Activated CD8-positive, alpha-beta T cell treated with anti-CD3 and anti-CD28 coated beads for 36 hours (primary cell): ENCODE measurements at regions of chr22 and their contacts with region 1.

Region 1: DNA sequence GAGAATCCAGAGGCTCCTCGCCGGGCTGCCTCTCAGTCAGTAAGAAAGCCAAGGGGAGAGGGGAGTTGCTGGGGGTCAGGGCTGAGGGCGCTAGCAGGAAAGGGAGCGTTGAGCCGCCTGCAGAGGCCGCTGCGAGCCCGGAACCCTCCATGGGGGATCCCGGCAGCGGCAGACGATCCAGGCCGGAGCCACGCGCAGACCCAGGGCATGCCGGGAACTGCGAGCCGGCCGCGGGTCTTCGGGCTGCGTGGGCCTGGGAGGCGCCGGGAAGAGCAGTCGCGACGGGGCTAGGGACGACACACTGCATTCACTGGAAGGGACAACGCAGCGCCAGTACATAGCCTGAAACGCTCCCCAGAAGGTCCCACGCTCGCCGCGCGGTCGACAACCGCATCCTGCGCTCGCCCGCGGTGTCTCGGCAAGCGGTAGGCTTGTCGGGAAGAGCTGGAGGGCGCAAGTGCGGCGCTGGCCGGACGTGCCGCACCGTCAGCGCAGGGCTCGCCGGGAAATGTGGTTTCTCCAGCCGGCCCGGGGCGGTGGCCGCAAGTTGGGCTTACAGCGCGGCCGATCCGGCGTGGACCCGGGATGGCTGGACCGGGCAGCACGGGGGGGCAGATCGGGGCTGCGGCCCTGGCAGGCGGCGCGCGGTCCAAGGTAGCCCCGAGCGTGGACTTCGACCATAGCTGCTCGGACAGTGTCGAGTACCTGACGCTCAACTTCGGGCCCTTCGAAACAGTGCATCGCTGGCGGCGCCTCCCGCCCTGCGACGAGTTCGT is at the start of gene LZTR1:
- DNase-seq: peak; percentile 79
- ATAC-seq: peak; percentile 72
- H3K4me3 Mint-ChIP-seq: peak within 1 kb of the TSS; percentile 92
- H3K27ac Mint-ChIP-seq: peak within 1 kb of the TSS; percentile 84
- H3K4me1 Mint-ChIP-seq: peaks cover 40% of the 10 kb centered on the region
- H3K27me3 Mint-ChIP-seq: no peaks in the 10 kb centered on the region
- CTCF ChIP-seq: peak; percentile 56
- total RNA-seq, gene LZTR1: 29.1 to 34.5 TPM

Region 2: DNA sequence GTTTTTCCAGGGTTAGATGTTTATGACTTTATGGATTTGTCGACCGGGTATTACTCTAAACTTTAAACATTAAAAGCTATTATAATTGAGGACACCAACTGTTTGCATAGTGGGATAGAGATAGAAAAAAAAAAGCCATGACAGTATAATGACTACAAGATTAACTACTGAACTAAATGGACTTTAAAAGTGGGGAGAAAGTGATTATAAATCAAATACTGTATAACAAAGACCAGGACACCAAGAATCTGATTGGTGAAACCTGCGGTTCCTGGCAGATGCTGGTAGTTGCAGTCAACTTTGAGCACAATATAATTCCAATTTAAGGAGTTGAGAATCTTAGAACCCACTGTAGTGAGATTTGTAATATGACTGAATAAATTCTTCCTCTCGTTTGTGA is 62.3 kb before region 1 on chr22:
- CTCF ChIA-PET with region 1: interaction called, 3 read pairs
- POLR2A ChIA-PET with region 1: no interaction called
- intact Hi-C with region 1: loop called (anchors 10 kb)
- DNase-seq: no peak
- ATAC-seq: no peak
- H3K4me3 Mint-ChIP-seq: peak overlapping the region; percentile 99
- H3K27ac Mint-ChIP-seq: no peak overlapping the region
- H3K4me1 Mint-ChIP-seq: peaks cover 31% of the 10 kb centered on the region
- H3K27me3 Mint-ChIP-seq: no peaks in the 10 kb centered on the region
- CTCF ChIP-seq: no peak

Region 3: GRCh38 chr22:20959578-20960461 is 22.2 kb before region 1 on chr22:
- CTCF ChIA-PET with region 1: interaction called, 13 read pairs
- POLR2A ChIA-PET with region 1: interaction called, 4 read pairs
- intact Hi-C with region 1: no loop called
- DNase-seq: no peak
- ATAC-seq: no peak
- H3K4me3 Mint-ChIP-seq: no peak overlapping the region
- H3K27ac Mint-ChIP-seq: no peak overlapping the region
- H3K4me1 Mint-ChIP-seq: peaks cover 23% of the 10 kb centered on the region
- H3K27me3 Mint-ChIP-seq: peaks cover 29% of the 10 kb centered on the region
- CTCF ChIP-seq: no peak

Region 4: DNA sequence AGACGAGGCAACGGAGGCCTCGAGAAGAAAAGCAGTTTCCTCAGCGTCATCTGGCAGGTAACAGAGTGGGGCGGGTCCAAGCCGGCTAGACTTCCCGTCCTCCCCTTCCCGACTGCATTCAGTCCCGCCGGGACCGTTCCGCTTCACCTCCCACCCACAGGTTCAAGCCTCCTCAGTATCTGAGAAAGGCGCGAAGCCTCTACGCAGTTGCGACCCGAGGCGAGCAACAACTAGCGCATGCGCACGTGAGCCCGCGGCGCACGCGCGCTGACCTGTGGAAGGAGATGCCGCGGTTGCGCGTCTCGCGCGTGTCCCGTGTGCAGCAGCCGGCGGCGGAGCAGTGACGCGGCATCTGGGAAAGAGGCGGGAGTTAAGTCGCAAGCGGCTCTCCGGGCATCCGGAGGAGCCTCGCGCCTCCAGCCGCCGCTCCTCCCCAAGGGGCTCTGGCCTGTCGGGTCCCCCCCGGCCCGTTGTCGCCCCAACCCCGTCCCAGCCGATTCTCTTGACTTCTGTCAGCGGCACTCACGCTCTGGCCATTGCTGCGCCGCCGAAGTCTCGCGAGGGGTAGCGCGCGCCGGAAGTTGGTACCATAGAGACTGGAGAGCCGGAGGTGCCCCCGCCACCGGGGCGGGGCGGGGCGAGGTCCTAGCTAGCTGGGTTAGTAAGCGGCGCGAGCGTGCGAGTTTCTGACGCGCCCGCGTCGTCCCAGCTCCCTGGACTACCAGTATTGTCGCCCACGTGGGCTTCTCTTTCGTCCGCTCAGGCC is 19.8 kb after region 1 on chr22 and contains the start of gene THAP7:
- CTCF ChIA-PET with region 1: interaction called, 3 read pairs
- POLR2A ChIA-PET with region 1: interaction called, 51 read pairs
- intact Hi-C with region 1: no loop called
- DNase-seq: peak; percentile 98
- ATAC-seq: peak; percentile 93
- H3K4me3 Mint-ChIP-seq: peak within 1 kb of the TSS; percentile 92
- H3K27ac Mint-ChIP-seq: peak within 1 kb of the TSS; percentile 96
- H3K4me1 Mint-ChIP-seq: peaks cover 15% of the 10 kb centered on the region
- H3K27me3 Mint-ChIP-seq: no peaks in the 10 kb centered on the region
- CTCF ChIP-seq: no peak
- total RNA-seq, gene THAP7: 23.7 to 23.8 TPM

Region 5: DNA sequence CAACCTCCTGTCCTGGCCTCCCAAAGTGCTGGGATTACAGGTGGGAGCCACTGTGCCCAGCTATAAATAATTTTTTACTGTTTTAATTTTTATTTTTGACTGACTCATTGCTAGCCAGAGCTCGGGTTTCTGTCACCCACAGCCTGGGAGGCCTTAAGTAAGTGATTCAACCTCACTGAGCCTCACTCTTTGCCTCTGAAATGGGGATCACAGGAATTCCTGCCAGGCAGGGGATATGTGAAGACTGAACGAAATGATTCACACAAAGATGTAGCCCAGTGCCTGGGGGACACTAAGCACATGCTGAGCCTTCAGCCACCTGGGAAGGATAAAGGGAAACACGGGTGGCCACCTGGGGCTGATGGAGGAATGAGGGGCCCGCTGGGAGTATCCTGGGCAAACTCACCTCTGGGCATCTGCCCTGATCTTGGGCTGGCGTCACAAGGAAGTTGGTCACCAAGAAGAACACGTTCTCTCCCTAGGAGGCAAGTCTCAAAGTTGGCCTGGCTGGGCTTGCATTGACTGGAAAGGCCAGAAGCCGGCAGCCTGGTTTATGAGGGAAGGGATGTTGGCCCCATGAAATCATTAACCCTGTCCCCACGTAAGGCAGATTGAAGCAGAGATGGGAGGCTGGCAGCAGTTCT is 60.1 kb after region 1 on chr22:
- CTCF ChIA-PET with region 1: no interaction called
- POLR2A ChIA-PET with region 1: no interaction called
- intact Hi-C with region 1: no loop called
- DNase-seq: no peak
- ATAC-seq: no peak
- H3K4me3 Mint-ChIP-seq: no peak overlapping the region
- H3K27ac Mint-ChIP-seq: no peak overlapping the region
- H3K4me1 Mint-ChIP-seq: peaks cover 15% of the 10 kb centered on the region
- H3K27me3 Mint-ChIP-seq: peaks cover 28% of the 10 kb centered on the region
- CTCF ChIP-seq: no peak

Region 6: GRCh38 chr22:21102659-21103267 is 120.8 kb after region 1 on chr22:
- CTCF ChIA-PET with region 1: no interaction called
- POLR2A ChIA-PET with region 1: no interaction called
- intact Hi-C with region 1: no loop called
- DNase-seq: peak; percentile 85
- ATAC-seq: peak; percentile 98
- H3K4me3 Mint-ChIP-seq: no peak overlapping the region
- H3K27ac Mint-ChIP-seq: no peak overlapping the region
- H3K4me1 Mint-ChIP-seq: peaks cover 9% of the 10 kb centered on the region
- H3K27me3 Mint-ChIP-seq: peaks cover 21% of the 10 kb centered on the region
- CTCF ChIP-seq: peak; percentile 92